ENCODE measurements at regions of chr12 and their contacts with region 1.

Region 1: DNA sequence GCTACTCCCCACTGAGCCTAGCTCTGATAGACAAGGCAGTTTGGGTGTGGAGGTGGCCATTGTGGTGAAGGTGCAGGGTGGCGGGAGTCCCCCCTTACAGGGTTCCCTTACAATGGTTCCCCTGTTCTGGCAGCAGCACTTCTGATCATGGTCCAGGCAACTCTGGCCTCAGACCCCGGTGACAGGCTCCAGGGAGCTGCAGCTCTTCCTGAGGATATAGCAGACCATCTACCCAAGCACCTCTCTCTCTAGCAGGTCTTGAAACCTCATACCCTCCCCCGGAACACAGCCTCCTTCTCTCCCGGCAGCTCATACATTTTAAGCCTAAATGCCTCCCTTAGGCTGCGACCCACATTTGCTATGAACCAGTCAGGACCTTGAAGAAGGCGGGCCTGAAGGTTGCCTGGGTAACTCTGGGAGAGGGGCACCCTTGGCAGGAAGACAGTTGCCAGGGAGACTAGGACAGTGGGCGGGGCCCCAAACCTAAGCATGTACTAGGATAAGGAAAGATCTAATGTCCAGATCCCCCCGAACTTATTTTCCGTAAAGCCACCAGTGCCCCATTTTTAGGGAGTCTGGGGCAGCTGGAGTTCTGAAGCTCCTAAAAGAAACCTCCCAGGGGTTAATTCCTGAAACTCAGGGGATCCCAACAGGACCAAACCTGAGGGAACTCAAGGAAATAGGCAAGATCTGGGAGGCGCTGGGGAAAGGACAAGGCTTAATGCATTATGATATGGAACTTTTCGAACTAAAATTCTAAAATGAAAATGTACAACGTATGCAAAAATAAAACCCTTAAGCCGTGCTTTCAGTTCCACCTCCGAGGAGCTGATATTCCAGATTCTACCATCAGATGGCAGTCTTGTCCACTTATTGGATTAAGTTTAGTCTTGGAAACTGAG is 4.5 kb upstream of the GDF11 start:
- DNase-seq: peak; percentile 90
- ATAC-seq: peak; percentile 73
- H3K4me3 Mint-ChIP-seq: peak overlapping the region; percentile 82
- H3K27ac Mint-ChIP-seq: peak overlapping the region; percentile 86
- H3K4me1 Mint-ChIP-seq: peaks cover 43% of the 10 kb centered on the region
- H3K27me3 Mint-ChIP-seq: peaks cover 7% of the 10 kb centered on the region

Region 2: GRCh38 chr12:55700255-55701018 is 37.9 kb before region 1 on chr12:
- CTCF ChIA-PET with region 1: no interaction called
- POLR2A ChIA-PET with region 1: no interaction called
- DNase-seq: no peak
- ATAC-seq: no peak
- H3K4me3 Mint-ChIP-seq: no peak overlapping the region
- H3K27ac Mint-ChIP-seq: no peak overlapping the region
- H3K4me1 Mint-ChIP-seq: no peaks in the 10 kb centered on the region
- H3K27me3 Mint-ChIP-seq: peaks cover 3% of the 10 kb centered on the region

Region 3: GRCh38 chr12:55797068-55797467 is 58.7 kb after region 1 on chr12:
- CTCF ChIA-PET with region 1: interaction called, 114 read pairs
- POLR2A ChIA-PET with region 1: no interaction called
- DNase-seq: no peak
- ATAC-seq: no peak
- H3K4me3 Mint-ChIP-seq: no peak overlapping the region
- H3K27ac Mint-ChIP-seq: no peak overlapping the region
- H3K4me1 Mint-ChIP-seq: peaks cover 12% of the 10 kb centered on the region
- H3K27me3 Mint-ChIP-seq: no peaks in the 10 kb centered on the region

Region 4: GRCh38 chr12:55926738-55927587 is 188.6 kb after region 1 on chr12:
- CTCF ChIA-PET with region 1: interaction called, 33 read pairs
- POLR2A ChIA-PET with region 1: interaction called, 6 read pairs
- DNase-seq: peak; percentile 97
- ATAC-seq: peak; percentile 43
- H3K4me3 Mint-ChIP-seq: peak overlapping the region; percentile 95
- H3K27ac Mint-ChIP-seq: peak overlapping the region; percentile 99
- H3K4me1 Mint-ChIP-seq: peaks cover 43% of the 10 kb centered on the region
- H3K27me3 Mint-ChIP-seq: no peaks in the 10 kb centered on the region

Region 5: GRCh38 chr12:55996715-55997534 is 258.6 kb after region 1 on chr12 and contains the start of gene SUOX:
- CTCF ChIA-PET with region 1: interaction called, 29 read pairs
- POLR2A ChIA-PET with region 1: interaction called, 3 read pairs
- DNase-seq: peak; percentile 63
- ATAC-seq: peak; percentile 73
- H3K4me3 Mint-ChIP-seq: peak within 1 kb of the TSS; percentile 76
- H3K27ac Mint-ChIP-seq: peak within 1 kb of the TSS; percentile 58
- H3K4me1 Mint-ChIP-seq: peaks cover 37% of the 10 kb centered on the region
- H3K27me3 Mint-ChIP-seq: no peaks in the 10 kb centered on the region
- total RNA-seq, gene SUOX: 5.8 to 6.8 TPM

Region 6: DNA sequence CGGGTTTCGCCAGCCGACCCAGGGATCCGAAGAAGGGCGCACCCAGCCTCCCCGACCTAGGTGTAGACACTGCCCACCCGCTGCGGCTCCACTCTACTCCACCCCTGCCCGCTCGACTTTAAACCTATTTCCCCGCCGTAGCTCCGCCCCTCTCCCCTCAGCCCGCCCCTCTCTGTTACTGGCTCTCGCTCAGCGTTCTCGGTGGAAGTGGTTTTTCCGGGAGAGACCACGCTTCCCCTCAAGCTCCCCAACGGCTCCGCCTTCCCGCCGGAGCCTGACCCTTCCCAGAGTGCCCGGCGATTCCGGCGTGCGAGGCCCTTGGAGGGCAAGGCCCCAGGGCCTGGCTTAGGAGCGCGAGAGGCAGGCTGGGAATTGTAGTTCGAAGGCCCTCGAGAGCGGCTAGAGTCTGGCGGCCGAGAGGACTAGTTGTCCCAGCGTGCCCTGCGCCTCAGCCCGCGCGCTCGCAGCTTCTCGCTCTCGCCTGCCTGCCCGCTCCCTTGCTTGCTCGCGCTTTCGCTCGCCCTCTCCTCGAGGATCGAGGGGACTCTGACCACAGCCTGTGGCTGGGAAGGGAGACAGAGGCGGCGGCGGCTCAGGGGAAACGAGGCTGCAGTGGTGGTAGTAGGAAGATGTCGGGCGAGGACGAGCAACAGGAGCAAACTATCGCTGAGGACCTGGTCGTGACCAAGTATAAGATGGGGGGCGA is 365.9 kb after region 1 on chr12 and contains the start of gene PA2G4:
- CTCF ChIA-PET with region 1: interaction called, 10 read pairs
- POLR2A ChIA-PET with region 1: interaction called, 3 read pairs
- DNase-seq: peak; percentile 99
- ATAC-seq: peak; percentile 94
- H3K4me3 Mint-ChIP-seq: peak within 1 kb of the TSS; percentile 100
- H3K27ac Mint-ChIP-seq: peak within 1 kb of the TSS; percentile 98
- H3K4me1 Mint-ChIP-seq: peaks cover 64% of the 10 kb centered on the region
- H3K27me3 Mint-ChIP-seq: no peaks in the 10 kb centered on the region
- total RNA-seq, gene PA2G4: 316 to 323 TPM